ENCODE measurements at regions of chrX and their contacts with region 1.

Region 1: GRCh38 chrX:20530406-20530921 is 263.8 kb upstream of the RPS6KA3 start:
- DNase-seq: peak; percentile 71
- ATAC-seq: no peak
- H3K4me3 Mint-ChIP-seq: no peak overlapping the region
- H3K27ac Mint-ChIP-seq: no peak overlapping the region
- H3K4me1 Mint-ChIP-seq: peaks cover 6% of the 10 kb centered on the region
- H3K27me3 Mint-ChIP-seq: peaks cover 34% of the 10 kb centered on the region

Region 2: DNA sequence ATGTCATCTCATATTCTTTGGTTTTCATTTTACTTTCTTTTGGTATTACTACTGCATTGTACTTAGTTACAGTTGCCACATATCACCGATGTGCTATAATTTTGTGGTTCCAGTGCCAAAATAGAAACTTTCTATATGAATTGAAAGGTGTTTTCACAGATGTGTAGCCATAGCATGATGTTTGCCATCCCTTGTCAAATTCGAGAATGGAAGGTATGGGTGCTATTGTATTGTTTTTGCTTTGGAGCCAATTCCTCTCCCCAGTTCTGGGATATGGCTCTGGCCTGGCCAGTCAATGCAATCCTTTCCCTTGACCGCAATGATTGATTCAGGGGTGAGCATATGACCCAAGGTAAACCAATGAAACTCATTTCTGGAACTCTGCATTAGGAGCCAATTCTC is 177.5 kb before region 1 on chrX:
- CTCF ChIA-PET with region 1: no interaction called
- POLR2A ChIA-PET with region 1: no interaction called
- DNase-seq: no peak
- ATAC-seq: no peak
- H3K4me3 Mint-ChIP-seq: no peak overlapping the region
- H3K27ac Mint-ChIP-seq: no peak overlapping the region
- H3K4me1 Mint-ChIP-seq: peaks cover 10% of the 10 kb centered on the region
- H3K27me3 Mint-ChIP-seq: no peaks in the 10 kb centered on the region

Region 3: GRCh38 chrX:20515841-20516461 is 14.5 kb before region 1 on chrX:
- CTCF ChIA-PET with region 1: interaction called, 26 read pairs
- POLR2A ChIA-PET with region 1: no interaction called
- DNase-seq: peak; percentile 43
- ATAC-seq: peak; percentile 92
- H3K4me3 Mint-ChIP-seq: peak overlapping the region; percentile 40
- H3K27ac Mint-ChIP-seq: peak overlapping the region; percentile 93
- H3K4me1 Mint-ChIP-seq: peaks cover 43% of the 10 kb centered on the region
- H3K27me3 Mint-ChIP-seq: peaks cover 4% of the 10 kb centered on the region

Region 4: DNA sequence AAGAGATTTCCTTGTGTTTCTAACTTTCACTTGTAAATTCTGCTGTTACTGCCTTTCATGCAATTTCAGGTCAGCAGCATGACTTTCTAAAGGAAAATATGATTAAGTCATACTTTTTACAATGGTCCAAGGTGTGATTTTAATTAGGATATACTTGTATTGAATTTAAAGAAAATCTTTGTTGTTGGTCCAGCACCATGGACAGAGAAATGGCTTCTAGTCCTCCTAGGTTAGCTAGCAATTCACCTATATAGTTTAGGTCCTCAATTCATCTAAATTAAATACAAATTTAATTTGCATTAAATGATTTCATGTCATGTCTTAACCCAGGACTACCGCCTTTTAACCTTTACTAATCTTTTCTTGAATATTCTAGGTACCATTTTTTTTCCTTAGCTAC is 41.1 kb after region 1 on chrX:
- CTCF ChIA-PET with region 1: no interaction called
- POLR2A ChIA-PET with region 1: no interaction called
- DNase-seq: no peak
- ATAC-seq: no peak
- H3K4me3 Mint-ChIP-seq: no peak overlapping the region
- H3K27ac Mint-ChIP-seq: no peak overlapping the region
- H3K4me1 Mint-ChIP-seq: peaks cover 8% of the 10 kb centered on the region
- H3K27me3 Mint-ChIP-seq: no peaks in the 10 kb centered on the region

Region 5: DNA sequence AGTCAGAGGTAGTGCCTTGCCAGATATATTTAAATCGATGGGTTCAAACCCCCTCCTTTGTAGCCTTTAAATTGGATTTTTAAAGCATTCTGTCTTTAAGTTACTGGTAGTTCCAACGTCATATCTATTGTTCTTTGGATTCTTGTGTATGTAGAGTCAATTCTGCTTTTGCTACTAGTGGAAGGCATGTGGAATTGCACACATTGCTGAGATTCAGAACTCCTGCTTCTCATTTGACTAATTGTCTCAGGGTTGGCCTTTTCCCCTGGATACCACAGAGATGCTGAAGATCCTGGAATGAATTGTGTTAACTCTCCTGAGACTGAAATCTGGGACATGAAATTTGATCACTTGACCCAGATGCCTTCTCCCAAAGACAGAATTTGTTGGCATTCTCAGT is 64.5 kb after region 1 on chrX:
- CTCF ChIA-PET with region 1: no interaction called
- POLR2A ChIA-PET with region 1: no interaction called
- DNase-seq: no peak
- ATAC-seq: no peak
- H3K4me3 Mint-ChIP-seq: no peak overlapping the region
- H3K27ac Mint-ChIP-seq: no peak overlapping the region
- H3K4me1 Mint-ChIP-seq: peaks cover 7% of the 10 kb centered on the region
- H3K27me3 Mint-ChIP-seq: no peaks in the 10 kb centered on the region

Region 6: GRCh38 chrX:21479695-21480270 is 949.3 kb after region 1 on chrX:
- CTCF ChIA-PET with region 1: interaction called, 31 read pairs
- POLR2A ChIA-PET with region 1: no interaction called
- DNase-seq: peak; percentile 22
- ATAC-seq: peak; percentile 55
- H3K4me3 Mint-ChIP-seq: no peak overlapping the region
- H3K27ac Mint-ChIP-seq: no peak overlapping the region
- H3K4me1 Mint-ChIP-seq: no peaks in the 10 kb centered on the region
- H3K27me3 Mint-ChIP-seq: no peaks in the 10 kb centered on the region